ENCODE measurements at regions of chr2 and their contacts with region 1.

Region 1: GRCh38 chr2:85826990-85827878 is 61.6 kb downstream of the ST3GAL5 start:
- H3K4me3 ChIP-seq: no peak overlapping the region
- H3K27ac ChIP-seq: no peak overlapping the region
- H3K4me1 ChIP-seq: no peaks in the 10 kb centered on the region
- CTCF ChIP-seq: peak; percentile 86

Region 2: DNA sequence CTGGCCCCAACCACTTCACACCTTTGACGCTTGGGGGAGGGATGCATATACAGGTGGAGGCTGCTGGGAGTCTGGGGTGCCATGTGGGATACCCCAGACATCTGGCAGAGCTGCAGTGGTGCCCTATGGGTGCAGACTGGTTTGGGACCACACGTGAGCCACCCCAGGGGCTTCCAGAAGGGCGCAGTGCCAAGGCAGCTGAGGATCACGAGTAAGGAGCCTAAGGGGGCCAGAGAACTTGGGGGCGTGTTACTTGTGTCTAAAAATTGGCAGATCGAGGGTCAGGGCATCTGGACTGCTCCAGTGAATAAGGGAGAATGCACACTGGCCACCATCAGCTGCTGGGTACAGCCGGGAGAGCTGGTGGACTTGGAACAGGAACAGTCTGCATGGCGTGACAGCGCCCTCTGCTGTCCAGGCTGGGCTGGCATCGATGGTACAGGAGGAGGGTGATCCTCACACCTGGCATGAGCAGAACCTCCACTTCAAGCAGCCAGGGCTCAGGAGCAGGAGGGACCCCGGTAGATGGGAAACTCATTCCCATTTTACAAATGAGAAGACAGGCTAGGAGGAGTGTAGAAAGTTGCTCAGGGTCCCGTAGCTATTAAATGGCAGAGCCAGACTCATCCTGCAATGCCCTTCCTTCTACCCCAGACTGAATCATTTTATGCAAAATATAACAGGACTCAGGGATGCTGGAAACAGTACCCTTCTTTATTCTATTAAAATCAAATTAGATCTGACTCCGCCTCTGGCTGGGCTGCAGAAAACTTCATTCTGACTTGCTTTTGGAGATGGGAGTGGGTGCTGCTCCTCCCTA is 13.0 kb before region 1 on chr2:
- CTCF ChIA-PET with region 1: interaction called, 30 read pairs
- POLR2A ChIA-PET with region 1: interaction called, 11 read pairs
- H3K4me3 ChIP-seq: no peak overlapping the region
- H3K27ac ChIP-seq: no peak overlapping the region
- H3K4me1 ChIP-seq: no peaks in the 10 kb centered on the region
- CTCF ChIP-seq: peak; percentile 85

Region 3: GRCh38 chr2:85888684-85889626 is 61.7 kb after region 1 on chr2 and contains the start of gene ST3GAL5:
- CTCF ChIA-PET with region 1: interaction called, 20 read pairs
- POLR2A ChIA-PET with region 1: no interaction called
- H3K4me3 ChIP-seq: peak within 1 kb of the TSS; percentile 60
- H3K27ac ChIP-seq: peak within 1 kb of the TSS; percentile 65; the same call in 1 of the 2 replicates
- H3K4me1 ChIP-seq: peaks cover 10% of the 10 kb centered on the region; the same call in 1 of the 2 replicates
- CTCF ChIP-seq: peak; percentile 74

Region 4: DNA sequence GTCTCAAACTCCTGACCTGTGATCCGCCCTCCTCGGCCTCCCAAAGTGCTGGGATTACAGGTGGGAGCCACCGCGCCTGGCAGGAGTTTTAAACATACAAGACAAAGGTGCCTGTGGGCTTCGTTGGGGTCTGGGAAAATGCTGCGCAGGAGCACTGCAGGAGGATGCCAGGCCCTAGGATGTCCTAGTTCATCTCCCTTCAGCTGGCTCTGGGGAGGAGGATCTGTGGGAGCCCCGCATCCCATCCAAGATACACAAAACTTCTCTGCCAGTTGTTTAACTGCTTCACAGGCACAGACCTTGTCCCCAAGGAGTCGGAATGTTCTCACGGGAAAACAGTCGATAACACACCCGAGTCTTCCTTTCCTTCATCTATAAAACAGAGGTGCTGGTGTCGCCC is 189.3 kb after region 1 on chr2:
- CTCF ChIA-PET with region 1: no interaction called
- POLR2A ChIA-PET with region 1: no interaction called
- H3K4me3 ChIP-seq: no peak overlapping the region
- H3K27ac ChIP-seq: no peak overlapping the region
- H3K4me1 ChIP-seq: no peaks in the 10 kb centered on the region
- CTCF ChIP-seq: no peak

Region 5: DNA sequence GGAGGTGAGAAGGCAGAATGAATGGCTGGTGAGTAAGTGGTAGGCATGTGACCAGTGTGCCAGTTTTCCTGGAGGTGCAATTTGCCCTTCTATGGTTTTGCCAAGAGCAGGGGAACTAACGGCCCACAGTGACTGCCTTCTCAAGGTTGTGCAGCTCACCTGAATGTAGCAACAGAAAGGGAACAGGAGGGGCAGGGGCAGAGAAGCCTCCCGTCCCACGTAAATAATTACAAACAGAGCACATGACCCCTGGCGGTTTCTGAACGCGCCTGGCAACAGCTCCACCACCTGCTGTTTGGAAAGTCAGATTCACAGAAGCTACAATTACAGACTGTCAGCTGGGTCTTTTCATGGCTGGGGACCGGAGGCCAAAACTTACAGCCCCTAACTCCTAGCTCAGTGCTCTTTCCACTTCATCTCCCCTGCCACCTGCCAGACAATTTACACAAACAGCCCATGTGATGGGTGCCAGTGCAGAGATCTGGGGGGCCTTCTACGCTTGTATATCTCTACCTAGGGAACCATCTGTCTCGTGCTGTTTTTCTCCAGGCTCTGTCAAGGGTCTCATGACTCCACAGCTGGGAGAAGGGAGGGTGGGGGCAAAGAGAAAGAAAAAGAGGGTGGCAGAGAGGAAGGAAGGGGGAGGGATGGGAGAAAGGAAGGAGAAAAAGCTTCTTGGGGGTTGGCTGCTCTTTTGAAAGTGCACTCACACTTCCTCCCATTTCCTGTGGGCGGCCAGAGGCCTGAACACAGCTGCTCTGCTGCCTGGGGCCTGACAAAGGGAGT is 208.8 kb after region 1 on chr2:
- CTCF ChIA-PET with region 1: interaction called, 10 read pairs
- POLR2A ChIA-PET with region 1: no interaction called
- H3K4me3 ChIP-seq: no peak overlapping the region
- H3K27ac ChIP-seq: no peak overlapping the region
- H3K4me1 ChIP-seq: no peaks in the 10 kb centered on the region
- CTCF ChIP-seq: no peak

Region 6: DNA sequence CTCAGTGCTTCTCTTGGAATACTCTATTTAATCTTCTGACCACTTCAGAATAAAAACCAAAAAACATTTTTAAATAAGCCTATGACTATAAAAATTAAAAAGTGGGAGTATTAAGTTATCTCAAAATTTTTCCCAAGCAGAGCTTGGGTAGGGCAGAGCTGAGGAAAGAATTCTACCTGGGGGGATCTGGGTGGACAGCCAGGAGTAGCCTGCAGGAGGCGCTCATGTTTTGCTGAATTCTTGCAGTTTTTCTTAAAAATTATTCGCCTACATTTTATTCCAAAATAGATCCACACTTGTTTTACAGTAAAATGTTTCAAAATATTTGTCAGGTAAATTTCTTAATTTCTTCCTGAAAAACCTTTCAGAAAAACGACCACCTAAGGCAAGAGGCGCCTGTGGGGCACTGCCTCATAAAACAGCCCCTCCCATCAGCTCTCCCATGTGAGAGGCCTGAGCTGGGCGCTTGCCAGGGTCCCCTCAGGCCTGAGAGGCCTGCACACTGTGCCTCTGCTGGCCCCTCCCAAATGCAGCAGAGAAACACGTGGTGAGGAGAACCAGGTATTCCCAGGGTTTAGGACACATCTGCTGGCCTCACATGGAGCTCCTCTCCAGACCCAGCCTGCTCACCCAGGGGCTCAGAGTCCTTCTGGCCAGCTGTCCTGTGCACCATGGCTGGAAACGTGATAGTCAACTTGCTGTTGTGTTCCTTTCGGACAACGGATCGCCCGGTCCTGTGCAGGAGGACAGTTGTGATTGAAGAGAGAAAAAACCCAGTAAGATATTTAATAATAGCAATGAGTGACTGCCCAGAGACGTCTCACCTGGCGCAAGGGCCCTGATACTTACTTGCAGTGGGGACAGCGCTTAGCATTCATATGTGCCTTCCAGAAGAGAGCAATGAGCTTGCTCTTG is 261.0 kb after region 1 on chr2:
- CTCF ChIA-PET with region 1: interaction called, 216 read pairs
- POLR2A ChIA-PET with region 1: no interaction called
- H3K4me3 ChIP-seq: no peak overlapping the region
- H3K27ac ChIP-seq: no peak overlapping the region
- H3K4me1 ChIP-seq: no peaks in the 10 kb centered on the region
- CTCF ChIP-seq: no peak